ENCODE measurements at regions of chr12 and their contacts with region 1.

Region 1: DNA sequence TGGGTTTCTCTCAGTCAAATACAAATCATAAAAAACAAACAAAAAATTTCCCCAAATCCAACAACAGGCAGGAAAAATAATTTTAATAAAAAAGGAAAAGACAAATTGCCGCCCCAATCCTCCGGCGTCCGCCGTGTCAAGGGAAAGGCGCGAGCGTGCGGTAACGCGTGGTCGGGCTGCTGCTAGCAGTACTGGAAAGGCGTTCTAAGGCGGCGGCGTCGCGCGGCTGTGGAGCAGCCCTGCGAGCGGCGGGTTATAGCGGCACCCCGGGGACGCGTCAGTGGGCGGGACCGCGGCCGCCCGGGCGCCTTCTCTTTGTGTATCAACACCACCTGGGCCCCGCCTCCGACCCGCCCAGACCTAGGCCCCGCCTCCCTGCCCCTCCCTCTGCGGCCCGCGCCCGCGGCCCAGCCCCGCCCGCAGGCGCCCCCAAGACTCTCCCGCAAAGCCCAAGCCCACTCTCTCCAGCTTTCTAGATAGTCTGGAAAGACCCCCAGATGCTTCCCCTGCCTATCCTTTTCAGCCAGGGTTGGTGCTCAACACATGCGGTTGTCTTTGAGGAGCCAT is at the start of gene SLC38A2:
- DNase-seq: peak; percentile 91 to 94 (median 93)
- H3K4me3 ChIP-seq: peak within 1 kb of the TSS; percentile 71 to 99 (median 97)
- H3K4me3 Mint-ChIP-seq: peak within 1 kb of the TSS; percentile 97
- H3K27ac ChIP-seq: peak within 1 kb of the TSS; percentile 98 to 99
- H3K27ac Mint-ChIP-seq: peak within 1 kb of the TSS; percentile 98 to 99 (median 98)
- H3K4me1 ChIP-seq: peaks cover 39 to 49% of the 10 kb centered on the region in 2 donors
- H3K4me1 Mint-ChIP-seq: peaks cover 45% of the 10 kb centered on the region
- H3K27me3 ChIP-seq: no peaks in the 10 kb centered on the region
- H3K27me3 Mint-ChIP-seq: peaks cover 0 to 10% (median 3%) of the 10 kb centered on the region in 3 donors
- CTCF ChIP-seq: no peak
- polyA plus RNA-seq, gene SLC38A2: 33.8 to 116 (median 48.7) TPM

Region 2: DNA sequence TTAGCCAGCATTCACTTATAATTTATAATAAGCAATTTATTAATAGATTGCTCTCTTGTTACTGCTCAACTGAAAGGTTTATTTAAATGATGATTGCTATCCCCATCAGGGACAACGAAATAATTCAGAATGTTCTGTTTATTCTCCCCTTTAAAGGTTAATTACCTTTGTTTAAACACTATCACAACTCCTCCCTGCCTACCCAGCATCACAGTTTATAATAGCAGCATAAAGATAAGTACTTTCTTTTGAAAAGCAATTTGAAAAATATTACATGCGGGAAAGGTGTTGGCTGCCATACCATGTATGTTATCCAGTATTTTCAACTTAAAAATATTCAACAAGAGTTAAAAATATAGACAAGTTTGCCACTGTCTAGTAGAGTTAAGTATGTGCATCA is 412.9 kb before region 1 on chr12:
- intact Hi-C with region 1: no loop called
- DNase-seq: no peak
- H3K4me3 ChIP-seq: no peak overlapping the region
- H3K4me3 Mint-ChIP-seq: no peak overlapping the region
- H3K27ac ChIP-seq: no peak overlapping the region
- H3K27ac Mint-ChIP-seq: no peak overlapping the region
- H3K4me1 ChIP-seq: no peaks in the 10 kb centered on the region
- H3K4me1 Mint-ChIP-seq: no peaks in the 10 kb centered on the region
- H3K27me3 ChIP-seq: no peaks in the 10 kb centered on the region
- H3K27me3 Mint-ChIP-seq: peaks cover 0 to 1% (median 0%) of the 10 kb centered on the region in 3 donors
- CTCF ChIP-seq: no peak

Region 3: DNA sequence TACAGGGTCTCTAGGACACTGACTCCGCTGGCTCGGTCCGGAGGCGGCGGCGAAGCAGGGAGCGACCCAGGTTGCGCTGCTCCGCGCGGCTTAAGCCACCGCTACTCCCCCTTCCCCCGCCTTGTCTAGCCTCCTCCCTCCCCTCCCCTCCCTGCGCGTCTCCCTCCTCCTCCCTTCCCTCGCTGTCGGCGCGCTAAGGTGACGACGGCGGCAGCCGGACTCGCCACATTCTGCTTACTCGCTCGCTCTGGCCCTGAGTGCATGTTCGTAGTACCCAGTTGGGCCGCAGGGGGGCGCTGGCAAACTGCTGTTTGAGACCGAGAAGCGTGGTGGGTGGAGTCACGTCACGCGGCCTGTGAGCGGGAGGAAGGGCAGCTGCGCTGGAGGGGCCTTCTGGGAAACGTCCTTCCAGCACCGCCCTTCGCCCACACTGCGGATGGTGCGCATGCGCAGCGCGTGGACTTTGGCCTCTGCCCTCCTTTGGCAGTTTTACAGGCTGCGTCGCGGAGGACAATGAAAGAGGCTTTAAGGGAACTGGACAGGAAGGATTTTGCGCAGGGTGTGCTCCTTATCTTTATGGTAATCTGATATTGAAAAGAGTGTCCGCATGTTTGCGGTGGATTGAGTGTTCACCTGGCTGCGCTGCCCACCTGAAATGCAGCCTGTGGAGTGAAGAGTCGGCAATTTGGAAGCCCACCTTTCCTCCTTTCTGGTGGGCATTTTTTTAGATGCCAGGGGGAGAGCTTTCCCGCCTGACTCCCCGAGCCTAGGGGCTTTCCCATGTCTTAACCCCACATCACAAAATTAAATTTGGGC is 382.0 kb before region 1 on chr12 and contains the start of gene SCAF11:
- intact Hi-C with region 1: loop called (anchors 5 kb)
- DNase-seq: peak; percentile 100
- H3K4me3 ChIP-seq: peak within 1 kb of the TSS; percentile 71 to 87 (median 83)
- H3K4me3 Mint-ChIP-seq: peak within 1 kb of the TSS; percentile 96 to 98
- H3K27ac ChIP-seq: peak within 1 kb of the TSS; percentile 96 to 99
- H3K27ac Mint-ChIP-seq: peak within 1 kb of the TSS; percentile 95 to 98 (median 97)
- H3K4me1 ChIP-seq: peaks cover 32 to 48% of the 10 kb centered on the region in 2 donors
- H3K4me1 Mint-ChIP-seq: peaks cover 39% of the 10 kb centered on the region
- H3K27me3 ChIP-seq: no peaks in the 10 kb centered on the region
- H3K27me3 Mint-ChIP-seq: peaks cover 0 to 1% (median 0%) of the 10 kb centered on the region in 3 donors
- CTCF ChIP-seq: peak; percentile 85
- polyA plus RNA-seq, gene SCAF11: 32.6 to 73.4 (median 56.1) TPM

Region 4: DNA sequence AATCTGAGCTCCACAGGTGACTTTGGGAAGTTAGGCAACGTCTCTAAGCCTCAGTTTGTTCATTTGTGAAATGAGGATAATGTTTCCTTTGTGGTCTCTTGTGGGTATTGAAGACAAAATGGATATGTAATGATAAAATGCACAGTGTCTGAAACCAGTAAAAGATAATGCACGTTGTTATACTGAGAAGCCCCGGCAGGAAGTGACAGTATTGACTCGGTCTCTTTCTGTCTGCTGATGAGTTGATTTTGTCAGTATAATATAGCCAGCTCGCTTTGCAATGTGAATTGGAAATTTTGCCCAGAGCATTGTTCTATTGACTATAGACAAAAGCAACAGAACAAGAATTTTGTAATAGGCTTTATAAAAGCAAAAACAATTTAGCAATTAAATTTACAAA is 54.6 kb before region 1 on chr12:
- intact Hi-C with region 1: no loop called
- DNase-seq: no peak
- H3K4me3 ChIP-seq: no peak overlapping the region
- H3K4me3 Mint-ChIP-seq: no peak overlapping the region
- H3K27ac ChIP-seq: no peak overlapping the region
- H3K27ac Mint-ChIP-seq: no peak overlapping the region
- H3K4me1 ChIP-seq: no peaks in the 10 kb centered on the region
- H3K4me1 Mint-ChIP-seq: no peaks in the 10 kb centered on the region
- H3K27me3 ChIP-seq: no peaks in the 10 kb centered on the region
- H3K27me3 Mint-ChIP-seq: no peaks in the 10 kb centered on the region
- CTCF ChIP-seq: no peak

Region 5: DNA sequence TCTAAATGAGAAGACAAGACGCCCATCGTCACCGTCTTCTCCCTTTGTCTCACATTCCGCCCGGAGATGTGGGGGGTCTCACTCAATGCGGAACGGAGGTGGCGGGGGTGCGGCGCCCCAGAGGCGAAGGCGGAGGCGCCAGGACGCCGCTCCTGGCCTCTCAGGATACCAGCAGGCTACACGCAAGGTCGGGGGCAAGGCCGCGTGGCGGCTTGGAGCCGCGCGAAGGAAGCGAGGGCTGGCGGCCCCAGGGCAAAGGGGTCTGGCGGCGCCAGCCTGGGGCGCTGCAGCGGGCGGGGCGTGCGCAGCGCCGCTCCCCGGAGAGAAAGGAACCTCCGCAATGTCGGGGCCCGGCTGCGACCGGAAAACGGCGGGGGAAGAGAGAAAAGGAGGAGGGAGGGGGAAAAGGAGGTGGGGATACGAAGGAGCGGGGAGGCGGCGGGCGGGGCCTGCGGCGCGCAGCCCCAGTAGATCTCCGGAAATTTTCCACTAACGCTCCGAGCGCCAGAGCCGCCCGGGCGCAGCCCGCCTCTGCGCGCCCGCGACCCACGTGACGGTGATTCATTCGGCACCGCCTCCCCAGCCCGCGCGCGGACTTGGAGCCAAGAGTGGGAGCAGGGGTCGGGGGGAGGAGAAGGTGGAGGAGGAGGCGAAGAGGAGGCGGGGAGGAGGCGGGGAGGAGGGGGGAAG is 10.5 kb after region 1 on chr12:
- intact Hi-C with region 1: loop called (anchors 1 to 2 kb)
- DNase-seq: peak; percentile 95 to 96 (median 95)
- H3K4me3 ChIP-seq: peak overlapping the region; percentile 80 to 94 (median 86)
- H3K4me3 Mint-ChIP-seq: peak overlapping the region; percentile 83 to 92
- H3K27ac ChIP-seq: peak overlapping the region; percentile 96 to 100
- H3K27ac Mint-ChIP-seq: peak overlapping the region; percentile 96 to 99 (median 98)
- H3K4me1 ChIP-seq: peaks cover 46 to 53% of the 10 kb centered on the region in 2 donors
- H3K4me1 Mint-ChIP-seq: peaks cover 49% of the 10 kb centered on the region
- H3K27me3 ChIP-seq: no peaks in the 10 kb centered on the region
- H3K27me3 Mint-ChIP-seq: peaks cover 0 to 1% (median 0%) of the 10 kb centered on the region in 3 donors
- CTCF ChIP-seq: no peak

Region 6: GRCh38 chr12:46483572-46484395 is 111.2 kb after region 1 on chr12:
- intact Hi-C with region 1: loop called in 1 of 2 experiments (anchors 10 kb)
- DNase-seq: peak in 1 of 3 donors; percentile 14
- H3K4me3 ChIP-seq: no peak overlapping the region
- H3K4me3 Mint-ChIP-seq: no peak overlapping the region
- H3K27ac ChIP-seq: no peak overlapping the region
- H3K27ac Mint-ChIP-seq: no peak overlapping the region
- H3K4me1 ChIP-seq: peaks cover 33 to 44% of the 10 kb centered on the region in 2 donors
- H3K4me1 Mint-ChIP-seq: peaks cover 12% of the 10 kb centered on the region
- H3K27me3 ChIP-seq: no peaks in the 10 kb centered on the region
- H3K27me3 Mint-ChIP-seq: no peaks in the 10 kb centered on the region
- CTCF ChIP-seq: no peak